GM13976 (cell line): ENCODE measurements at regions of chr1 and their contacts with region 1.

Region 1: GRCh38 chr1:201042779-201043461 is 19.4 kb upstream of the KIF21B start:
- DNase-seq: peak; percentile 83
- CTCF ChIP-seq: peak; percentile 78

Region 2: GRCh38 chr1:200856716-200857352 is 186.1 kb before region 1 on chr1:
- in situ Hi-C with region 1: no loop called
- DNase-seq: no peak
- CTCF ChIP-seq: no peak

Region 3: DNA sequence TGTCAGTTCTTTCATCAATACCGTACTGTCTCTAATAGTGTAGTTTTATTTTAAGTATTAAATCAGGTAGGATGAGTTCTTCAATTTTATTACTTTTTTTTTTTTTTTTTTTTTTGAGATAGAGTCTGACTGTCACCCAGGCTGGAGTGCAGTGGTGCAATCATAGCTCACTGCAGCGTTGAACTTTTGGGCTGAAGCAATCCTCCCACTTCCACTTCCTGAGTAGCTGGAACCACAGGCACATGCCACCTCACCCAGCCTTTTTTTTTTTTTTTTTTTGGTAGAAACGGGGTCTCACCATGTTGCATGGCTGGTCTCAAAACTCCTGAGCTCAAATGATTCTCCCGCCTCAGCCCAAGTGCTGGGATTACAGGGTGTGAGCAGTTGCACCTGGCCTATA is 104.0 kb before region 1 on chr1:
- in situ Hi-C with region 1: no loop called
- DNase-seq: no peak
- CTCF ChIP-seq: no peak

Region 4: DNA sequence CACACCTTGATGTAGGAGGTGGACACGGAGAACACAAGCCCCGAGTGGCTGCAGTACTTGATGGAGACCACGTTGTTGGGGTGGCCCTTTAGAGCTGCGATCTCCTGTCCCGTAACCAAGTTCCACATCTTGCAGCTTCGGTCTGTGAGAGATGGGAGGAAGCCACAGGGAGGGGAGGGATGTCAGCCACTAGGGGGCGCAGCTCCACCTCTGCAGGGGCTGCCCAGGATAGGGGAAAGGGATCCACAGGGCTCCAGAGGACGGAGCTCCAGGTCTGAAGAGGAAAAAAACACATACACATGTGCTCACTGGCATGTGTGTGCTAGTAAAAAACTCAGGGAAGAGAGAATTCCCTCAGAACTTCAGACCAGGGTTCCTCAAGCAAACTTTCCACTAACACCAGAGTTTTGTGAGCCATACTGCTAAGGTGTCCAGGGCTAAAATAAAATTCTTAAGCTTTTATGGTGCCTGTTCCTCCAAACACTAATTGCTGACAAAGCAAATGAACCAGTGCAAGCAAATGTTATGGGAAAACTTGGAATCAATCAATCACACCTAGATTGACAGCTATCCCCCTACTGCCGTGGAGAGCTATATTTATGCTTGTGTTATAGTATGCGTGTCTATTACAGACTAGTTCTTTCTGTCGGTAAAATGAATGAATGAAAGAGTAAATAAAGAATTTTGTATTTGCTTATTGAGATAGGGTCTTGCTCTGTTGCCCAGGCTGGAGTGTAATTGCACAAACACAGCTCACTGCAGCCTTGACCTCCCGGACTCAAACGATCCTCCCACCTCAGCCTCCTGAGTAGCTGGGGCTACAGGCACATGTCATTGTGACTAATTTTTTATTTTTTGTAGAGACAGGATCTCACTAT is 63.1 kb before region 1 on chr1:
- in situ Hi-C with region 1: loop called (anchors 5 kb)
- DNase-seq: peak; percentile 78
- CTCF ChIP-seq: peak; percentile 62

Region 5: GRCh38 chr1:201295861-201296260 is 252.9 kb after region 1 on chr1:
- in situ Hi-C with region 1: no loop called
- DNase-seq: no peak
- CTCF ChIP-seq: no peak